ENCODE measurements at regions of chr4 and their contacts with region 1.

Region 1: GRCh38 chr4:26719954-26720552 is 136.2 kb downstream of the TBC1D19 start:
- DNase-seq: no peak
- ATAC-seq: no peak
- H3K4me3 ChIP-seq: no peak overlapping the region
- H3K27ac ChIP-seq: no peak overlapping the region
- H3K4me1 ChIP-seq: peaks cover 0 to 2% (median 0%) of the 10 kb centered on the region in 12 donors
- H3K27me3 ChIP-seq: no peaks in the 10 kb centered on the region
- CTCF ChIP-seq: peak; percentile 38 to 79 (median 56)
- POLR2A ChIP-seq: no peak

Region 2: DNA sequence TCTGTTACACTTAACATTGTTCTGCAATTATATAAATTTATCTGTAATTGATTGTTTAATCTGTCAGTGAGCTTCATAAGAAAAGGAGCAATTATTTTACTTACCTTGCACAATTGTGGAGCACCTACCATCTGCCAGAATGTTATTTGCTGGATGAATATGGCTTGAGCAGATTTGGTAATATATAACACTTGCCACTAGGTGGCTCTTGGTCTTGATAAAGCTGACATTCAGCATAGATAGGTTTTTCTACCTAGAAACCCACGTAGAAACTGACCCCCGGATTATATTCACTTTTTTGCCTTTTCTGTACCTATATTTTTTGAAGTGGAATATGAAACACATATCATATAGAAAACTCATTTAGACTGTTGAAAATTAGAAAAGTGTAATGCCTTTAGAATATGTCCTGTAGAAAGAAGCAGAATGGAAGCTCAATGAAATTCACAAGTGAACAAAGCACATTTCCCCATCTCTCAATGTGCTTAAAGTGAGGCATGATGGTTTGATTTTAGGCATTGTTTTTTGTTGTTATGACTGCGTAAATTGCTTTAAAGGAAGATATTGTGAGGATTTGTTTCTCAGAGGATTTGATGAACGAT is 389.8 kb before region 1 on chr4:
- intact Hi-C with region 1: loop called in 2 of 10 experiments (anchors 10 kb)
- DNase-seq: no peak
- ATAC-seq: peak in 3 of 4 donors; percentile 32 to 77 (median 69)
- H3K4me3 ChIP-seq: no peak overlapping the region
- H3K27ac ChIP-seq: no peak overlapping the region
- H3K4me1 ChIP-seq: peaks cover 0 to 54% (median 19%) of the 10 kb centered on the region in 12 donors
- H3K27me3 ChIP-seq: no peaks in the 10 kb centered on the region
- CTCF ChIP-seq: peak; percentile 53 to 78 (median 67)
- POLR2A ChIP-seq: no peak

Region 3: GRCh38 chr4:26356081-26356501 is 364.0 kb before region 1 on chr4:
- intact Hi-C with region 1: no loop called
- DNase-seq: peak in 1 of 5 donors; percentile 33
- ATAC-seq: peak; percentile 77 to 94 (median 87)
- H3K4me3 ChIP-seq: no peak overlapping the region
- H3K27ac ChIP-seq: no peak overlapping the region
- H3K4me1 ChIP-seq: peaks cover 0 to 62% (median 14%) of the 10 kb centered on the region in 12 donors
- H3K27me3 ChIP-seq: no peaks in the 10 kb centered on the region
- CTCF ChIP-seq: no peak
- POLR2A ChIP-seq: no peak

Region 4: GRCh38 chr4:26459054-26459755 is 260.8 kb before region 1 on chr4:
- intact Hi-C with region 1: loop called (anchors 2 to 10 kb)
- DNase-seq: no peak
- ATAC-seq: peak in 2 of 4 donors; percentile 59 to 60
- H3K4me3 ChIP-seq: no peak overlapping the region
- H3K27ac ChIP-seq: peak overlapping the region in 1 of 12 donors; percentile 29
- H3K4me1 ChIP-seq: peaks cover 0 to 6% (median 0%) of the 10 kb centered on the region in 12 donors
- H3K27me3 ChIP-seq: no peaks in the 10 kb centered on the region
- CTCF ChIP-seq: peak; percentile 38 to 68 (median 57)
- POLR2A ChIP-seq: no peak

Measured in heart left ventricle (tissue), 16 donors.